Right ventricle myocardium superior (tissue), 1 donor: ENCODE measurements at regions of chr18 and their contacts with region 1.

Region 1: DNA sequence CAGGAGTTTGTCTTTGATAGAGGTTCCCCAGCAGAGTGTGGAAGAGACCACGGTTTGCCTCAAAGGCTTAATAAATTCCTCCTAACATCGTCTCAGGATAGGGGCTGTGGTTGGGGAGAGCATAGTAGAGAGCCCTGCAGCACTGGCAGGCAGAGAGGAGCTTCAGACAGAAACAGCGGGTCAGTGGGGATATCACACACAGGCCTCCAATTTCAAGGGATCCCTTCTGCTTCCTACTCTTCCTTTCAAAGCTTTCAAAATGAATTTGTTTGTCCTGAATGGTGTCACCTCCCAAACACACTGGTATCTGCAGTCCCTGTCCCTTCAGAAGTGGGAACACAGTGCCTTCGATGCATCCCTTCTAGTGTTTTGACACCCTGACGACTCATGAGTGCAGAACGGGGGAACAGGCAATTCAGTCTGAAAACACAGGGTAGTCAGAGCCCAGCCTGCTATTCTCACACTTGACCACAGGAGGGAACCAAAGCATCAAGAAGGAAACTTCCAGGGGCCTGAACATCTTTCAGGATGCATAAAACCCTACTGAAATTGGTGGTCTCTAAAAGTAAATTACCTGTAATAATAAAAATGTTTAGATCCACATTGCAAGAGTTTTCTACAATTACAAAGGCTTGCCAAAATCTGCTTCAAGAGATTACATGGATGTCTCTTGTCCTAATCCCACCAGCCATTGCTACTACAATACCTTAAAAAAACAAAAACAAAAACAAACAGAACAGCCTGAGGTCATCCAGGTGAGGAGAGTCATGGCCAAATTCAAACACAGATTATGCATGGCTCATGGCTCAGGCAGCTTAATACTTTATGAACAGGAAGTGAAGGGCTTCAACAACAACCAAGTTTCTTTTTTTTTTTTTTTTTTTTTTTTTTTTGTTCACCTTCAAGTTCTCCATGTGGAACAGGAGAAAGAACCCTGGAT is 49.8 kb downstream of the SLC14A2 start:
- DNase-seq: no peak
- ATAC-seq: peak; percentile 85

Region 2: GRCh38 chr18:45482286-45482685 is 182.8 kb before region 1 on chr18:
- intact Hi-C with region 1: no loop called
- DNase-seq: no peak
- ATAC-seq: no peak

Region 3: GRCh38 chr18:45935591-45936335 is 270.7 kb after region 1 on chr18:
- intact Hi-C with region 1: no loop called
- DNase-seq: no peak
- ATAC-seq: no peak

Region 4: DNA sequence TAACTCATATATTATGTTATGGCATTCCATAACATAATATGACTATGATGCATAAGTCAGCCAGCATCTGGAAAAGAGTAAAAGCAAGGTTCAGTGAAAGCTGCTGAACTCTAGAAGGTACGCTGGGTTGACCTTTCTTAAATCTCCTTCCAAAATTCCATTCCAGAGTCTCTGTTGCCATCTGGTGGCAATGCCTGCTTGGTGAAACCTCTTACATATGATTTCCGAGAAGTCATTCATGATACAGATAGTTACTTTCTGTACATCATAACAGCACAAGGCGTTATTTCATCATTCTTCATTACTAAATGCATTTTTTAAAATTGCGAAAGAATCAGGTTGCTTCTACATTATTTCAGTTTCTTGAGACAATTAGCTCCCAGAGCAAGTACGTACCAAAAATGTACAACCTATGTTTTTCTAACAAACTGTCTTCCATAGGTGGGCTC is 309.0 kb after region 1 on chr18:
- intact Hi-C with region 1: loop called (anchors 10 kb)
- DNase-seq: peak; percentile 51
- ATAC-seq: peak; percentile 89